ENCODE measurements at regions of chr2 and their contacts with region 1.

Region 1: DNA sequence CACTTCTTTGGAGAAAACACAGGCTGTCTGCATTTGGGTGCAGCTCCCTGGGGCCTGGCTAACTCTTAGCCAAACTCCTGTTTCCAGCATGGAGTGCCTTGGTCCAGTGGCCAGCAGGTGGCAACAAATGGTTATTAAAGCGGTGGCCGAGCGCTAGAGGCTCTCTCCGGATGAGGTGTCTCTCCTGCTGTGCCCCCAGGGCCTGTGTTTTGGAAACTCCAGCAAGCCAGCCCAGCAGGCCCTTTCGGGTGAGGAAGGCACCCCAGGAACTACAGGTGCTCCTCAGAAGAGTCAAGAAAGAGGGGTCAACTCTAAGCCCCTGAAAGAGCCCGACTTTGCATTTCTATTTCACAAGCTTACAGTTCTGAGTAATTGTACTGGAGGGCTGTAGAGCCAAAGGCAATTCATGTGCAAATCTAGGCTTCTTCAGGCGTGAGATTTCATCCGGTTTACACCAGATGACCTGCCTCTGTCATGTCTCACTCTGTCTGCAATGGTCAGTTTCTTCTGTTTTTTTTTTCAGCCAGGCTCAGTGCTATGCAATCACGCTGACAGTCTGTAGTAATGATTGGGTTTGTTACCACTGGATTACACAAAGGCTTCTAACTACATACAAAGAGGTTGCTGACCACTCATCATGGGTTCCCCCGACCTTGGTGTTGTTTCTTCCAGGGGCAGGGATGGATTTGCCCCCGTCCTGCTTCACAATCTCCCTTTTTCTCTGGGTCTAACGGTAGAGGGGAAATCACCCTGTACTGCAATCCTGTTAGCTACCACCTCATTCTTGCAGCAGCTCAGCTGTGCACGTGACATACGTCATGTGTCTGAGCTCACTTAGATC is 7.6 kb upstream of the CHRNA1 start:
- H3K4me3 ChIP-seq: no peak overlapping the region
- H3K27ac ChIP-seq: no peak overlapping the region
- H3K4me1 ChIP-seq: no peaks in the 10 kb centered on the region
- CTCF ChIP-seq: peak; percentile 84

Region 2: GRCh38 chr2:174971865-174972781 is 200.3 kb after region 1 on chr2:
- CTCF ChIA-PET with region 1: interaction called, 19 read pairs
- POLR2A ChIA-PET with region 1: no interaction called
- H3K4me3 ChIP-seq: no peak overlapping the region
- H3K27ac ChIP-seq: no peak overlapping the region
- H3K4me1 ChIP-seq: peaks cover 9% of the 10 kb centered on the region
- CTCF ChIP-seq: no peak

Region 3: GRCh38 chr2:174985630-174986029 is 213.8 kb after region 1 on chr2:
- CTCF ChIA-PET with region 1: interaction called, 142 read pairs
- POLR2A ChIA-PET with region 1: interaction called, 4 read pairs
- H3K4me3 ChIP-seq: no peak overlapping the region
- H3K27ac ChIP-seq: no peak overlapping the region
- H3K4me1 ChIP-seq: 0 out of 2 replicates have a peak, but pooled peaks cover 4% of the 10 kb centered on the region
- CTCF ChIP-seq: no peak

Region 4: GRCh38 chr2:174997110-174997509 is 225.3 kb after region 1 on chr2:
- CTCF ChIA-PET with region 1: interaction called, 42 read pairs
- POLR2A ChIA-PET with region 1: no interaction called
- H3K4me3 ChIP-seq: no peak overlapping the region
- H3K27ac ChIP-seq: no peak overlapping the region
- H3K4me1 ChIP-seq: no peaks in the 10 kb centered on the region; the same call in none of the 2 replicates
- CTCF ChIP-seq: no peak